ENCODE measurements at regions of chr1 and their contacts with region 1.

Region 1: GRCh38 chr1:223700942-223701637 is 11.2 kb upstream of the CAPN2 start:
- DNase-seq: no peak
- H3K4me3 Mint-ChIP-seq: peak overlapping the region; percentile 67
- H3K27ac Mint-ChIP-seq: peak overlapping the region; percentile 91
- H3K4me1 Mint-ChIP-seq: peaks cover 51% of the 10 kb centered on the region
- H3K27me3 Mint-ChIP-seq: peaks cover 6% of the 10 kb centered on the region

Region 2: DNA sequence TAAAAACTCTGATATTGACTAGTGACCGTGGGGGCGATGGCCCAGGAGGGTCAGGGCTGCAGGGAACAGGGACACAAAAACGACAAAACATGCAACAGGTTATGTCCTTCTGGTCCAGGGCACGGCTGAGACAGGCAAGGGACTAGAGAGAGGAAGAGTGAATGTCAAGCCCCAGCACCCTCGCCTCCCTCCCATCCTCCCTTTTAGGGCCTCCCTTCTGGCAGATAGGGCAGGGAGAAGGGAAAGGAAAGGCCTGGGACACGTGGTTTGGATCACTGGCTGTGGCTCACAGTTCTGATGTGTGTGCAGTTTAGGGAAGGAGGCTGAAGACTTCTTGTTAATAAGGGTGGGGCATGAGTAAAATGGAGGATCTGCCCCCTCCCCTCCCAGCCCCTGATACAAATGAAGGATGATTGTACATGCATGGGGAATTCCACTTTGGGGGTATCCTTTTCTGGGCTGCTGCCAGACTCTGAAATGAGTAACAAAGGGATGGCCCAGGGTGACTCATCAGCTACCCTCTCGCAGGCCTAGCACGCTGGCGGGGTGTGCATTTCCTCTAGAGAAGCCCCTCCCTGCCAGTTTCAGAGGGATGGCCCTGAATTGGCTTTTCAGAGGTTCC is 25.4 kb after region 1 on chr1:
- intact Hi-C with region 1: loop called (anchors 1 kb)
- DNase-seq: peak; percentile 95
- H3K4me3 Mint-ChIP-seq: peak overlapping the region; percentile 80
- H3K27ac Mint-ChIP-seq: peak overlapping the region; percentile 96
- H3K4me1 Mint-ChIP-seq: peaks cover 65% of the 10 kb centered on the region
- H3K27me3 Mint-ChIP-seq: no peaks in the 10 kb centered on the region

Region 3: GRCh38 chr1:223748773-223749733 is 48.0 kb after region 1 on chr1:
- intact Hi-C with region 1: loop called (anchors 1 kb)
- DNase-seq: peak; percentile 91
- H3K4me3 Mint-ChIP-seq: peak overlapping the region; percentile 76
- H3K27ac Mint-ChIP-seq: no peak overlapping the region
- H3K4me1 Mint-ChIP-seq: peaks cover 17% of the 10 kb centered on the region
- H3K27me3 Mint-ChIP-seq: no peaks in the 10 kb centered on the region

Region 4: GRCh38 chr1:223831755-223832636 is 130.9 kb after region 1 on chr1:
- intact Hi-C with region 1: loop called (anchors 2 kb)
- DNase-seq: no peak
- H3K4me3 Mint-ChIP-seq: peak overlapping the region; percentile 51
- H3K27ac Mint-ChIP-seq: peak overlapping the region; percentile 85
- H3K4me1 Mint-ChIP-seq: peaks cover 29% of the 10 kb centered on the region
- H3K27me3 Mint-ChIP-seq: no peaks in the 10 kb centered on the region

Region 5: GRCh38 chr1:223878598-223879325 is 177.7 kb after region 1 on chr1:
- intact Hi-C with region 1: no loop called
- DNase-seq: no peak
- H3K4me3 Mint-ChIP-seq: no peak overlapping the region
- H3K27ac Mint-ChIP-seq: no peak overlapping the region
- H3K4me1 Mint-ChIP-seq: no peaks in the 10 kb centered on the region
- H3K27me3 Mint-ChIP-seq: peaks cover 23% of the 10 kb centered on the region

Region 6: DNA sequence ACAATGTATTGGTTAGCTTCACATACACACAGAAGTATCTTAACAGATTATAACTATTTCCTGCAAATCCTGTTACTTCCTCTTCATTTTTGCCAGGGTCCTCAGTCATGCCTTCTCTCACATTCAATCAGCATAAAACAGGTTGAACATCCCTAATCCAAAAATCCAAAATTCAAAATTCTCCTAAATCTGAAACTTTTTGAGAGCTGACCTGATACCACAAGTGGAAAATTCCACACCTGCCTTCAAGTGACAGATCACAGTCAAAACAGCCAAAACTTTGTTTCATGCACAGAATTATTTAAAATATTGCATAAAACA is 350.0 kb after region 1 on chr1:
- intact Hi-C with region 1: loop called (anchors 2 kb)
- DNase-seq: no peak
- H3K4me3 Mint-ChIP-seq: no peak overlapping the region
- H3K27ac Mint-ChIP-seq: no peak overlapping the region
- H3K4me1 Mint-ChIP-seq: peaks cover 2% of the 10 kb centered on the region
- H3K27me3 Mint-ChIP-seq: peaks cover 18% of the 10 kb centered on the region